ENCODE measurements at regions of chr7 and their contacts with region 1.

Region 1: GRCh38 chr7:115449689-115450088 is 527.8 kb downstream of the MDFIC start:
- DNase-seq: peak in 1 of 2 donors; percentile 4
- ATAC-seq: peak; percentile 24 to 71 (median 66)
- H3K4me3 ChIP-seq: no peak overlapping the region
- H3K4me3 Mint-ChIP-seq: no peak overlapping the region
- H3K27ac ChIP-seq: no peak overlapping the region
- H3K27ac Mint-ChIP-seq: peak overlapping the region in 1 of 2 donors; percentile 46
- H3K4me1 ChIP-seq: no peaks in the 10 kb centered on the region
- H3K4me1 Mint-ChIP-seq: peaks cover 0 to 5% of the 10 kb centered on the region in 2 donors
- H3K27me3 ChIP-seq: no peaks in the 10 kb centered on the region
- H3K27me3 Mint-ChIP-seq: peaks cover 6% of the 10 kb centered on the region in 2 donors
- CTCF ChIP-seq: peak; percentile 12

Region 2: GRCh38 chr7:115356139-115356746 is 93.4 kb before region 1 on chr7:
- intact Hi-C with region 1: loop called (anchors 5 kb)
- DNase-seq: peak in 1 of 2 donors; percentile 8
- ATAC-seq: peak in 1 of 3 donors; percentile 49
- H3K4me3 ChIP-seq: no peak overlapping the region
- H3K4me3 Mint-ChIP-seq: no peak overlapping the region
- H3K27ac ChIP-seq: no peak overlapping the region
- H3K27ac Mint-ChIP-seq: peak overlapping the region in 1 of 2 donors; percentile 40
- H3K4me1 ChIP-seq: no peaks in the 10 kb centered on the region
- H3K4me1 Mint-ChIP-seq: peaks cover 16 to 17% of the 10 kb centered on the region in 2 donors
- H3K27me3 ChIP-seq: no peaks in the 10 kb centered on the region
- H3K27me3 Mint-ChIP-seq: peaks cover 0 to 9% of the 10 kb centered on the region in 2 donors
- CTCF ChIP-seq: peak; percentile 69

Region 3: GRCh38 chr7:115429918-115430317 is 19.8 kb before region 1 on chr7:
- intact Hi-C with region 1: loop called (anchors 1 kb)
- DNase-seq: no peak
- ATAC-seq: no peak
- H3K4me3 ChIP-seq: no peak overlapping the region
- H3K4me3 Mint-ChIP-seq: no peak overlapping the region
- H3K27ac ChIP-seq: no peak overlapping the region
- H3K27ac Mint-ChIP-seq: no peak overlapping the region
- H3K4me1 ChIP-seq: no peaks in the 10 kb centered on the region
- H3K4me1 Mint-ChIP-seq: no peaks in the 10 kb centered on the region
- H3K27me3 ChIP-seq: no peaks in the 10 kb centered on the region
- H3K27me3 Mint-ChIP-seq: peaks cover 0 to 3% of the 10 kb centered on the region in 2 donors
- CTCF ChIP-seq: no peak